HepG2 (cell line): ENCODE measurements at regions of chr1 and their contacts with region 1.

Region 1: GRCh38 chr1:66704177-66704875 is 47.9 kb upstream of the DYNLT5 start:
- DNase-seq: no peak
- ATAC-seq: no peak
- H3K4me3 ChIP-seq: no peak overlapping the region
- H3K27ac ChIP-seq: no peak overlapping the region
- H3K4me1 ChIP-seq: peaks cover 18% of the 10 kb centered on the region
- H3K27me3 ChIP-seq: no peaks in the 10 kb centered on the region
- CTCF ChIP-seq: no peak
- EP300 ChIP-seq: no peak
- POLR2A ChIP-seq: no peak
- RAD21 ChIP-seq: no peak

Region 2: GRCh38 chr1:66676613-66677298 is 27.6 kb before region 1 on chr1:
- CTCF ChIA-PET with region 1: no interaction called
- POLR2A ChIA-PET with region 1: no interaction called
- in situ Hi-C with region 1: no loop called
- intact Hi-C with region 1: loop called (anchors 1 kb)
- DNase-seq: no peak
- ATAC-seq: no peak
- H3K4me3 ChIP-seq: no peak overlapping the region
- H3K27ac ChIP-seq: no peak overlapping the region
- H3K4me1 ChIP-seq: peaks cover 7% of the 10 kb centered on the region; the same call in 1 of the 2 replicates
- H3K27me3 ChIP-seq: no peaks in the 10 kb centered on the region
- CTCF ChIP-seq: no peak
- EP300 ChIP-seq: no peak
- POLR2A ChIP-seq: no peak
- RAD21 ChIP-seq: no peak